ENCODE measurements at regions of chr5 and their contacts with region 1.

Region 1: GRCh38 chr5:147223948-147224791 is 10.7 kb upstream of the STK32A start:
- DNase-seq: peak; percentile 31 to 65
- H3K4me3 ChIP-seq: no peak overlapping the region
- H3K27ac ChIP-seq: no peak overlapping the region
- H3K4me1 ChIP-seq: no peaks in the 10 kb centered on the region
- H3K27me3 ChIP-seq: no peaks in the 10 kb centered on the region
- CTCF ChIP-seq: peak in 5 of 7 experiments; percentile 20 to 67 (median 51)
- EP300 ChIP-seq: no peak
- POLR2A ChIP-seq: no peak

Region 2: DNA sequence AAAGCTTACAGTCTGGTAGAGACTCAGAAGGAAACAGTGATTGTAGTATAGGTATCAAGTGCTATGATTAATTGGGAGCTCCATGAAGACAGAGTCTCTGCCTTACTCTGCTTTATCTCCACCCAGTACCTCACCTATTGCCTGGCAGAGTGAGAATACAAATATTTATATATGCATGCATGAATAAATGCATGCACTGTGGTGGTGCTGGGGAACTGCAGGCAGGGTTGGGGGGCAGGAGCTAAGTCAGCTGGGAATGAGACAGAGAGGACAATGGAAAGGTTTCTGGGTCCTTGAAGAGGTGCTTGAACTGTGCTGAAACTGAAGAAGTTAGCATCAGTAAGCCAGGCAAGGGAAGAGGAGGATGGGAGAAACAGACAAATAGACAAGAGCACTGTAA is 264.8 kb before region 1 on chr5:
- intact Hi-C with region 1: no loop called
- DNase-seq: no peak
- H3K4me3 ChIP-seq: no peak overlapping the region
- H3K27ac ChIP-seq: no peak overlapping the region
- H3K4me1 ChIP-seq: no peaks in the 10 kb centered on the region
- H3K27me3 ChIP-seq: no peaks in the 10 kb centered on the region
- CTCF ChIP-seq: no peak
- EP300 ChIP-seq: no peak
- POLR2A ChIP-seq: no peak

Region 3: GRCh38 chr5:147369742-147370374 is 145.7 kb after region 1 on chr5:
- intact Hi-C with region 1: loop called (anchors 5 kb)
- DNase-seq: no peak
- H3K4me3 ChIP-seq: no peak overlapping the region
- H3K27ac ChIP-seq: no peak overlapping the region
- H3K4me1 ChIP-seq: no peaks in the 10 kb centered on the region
- H3K27me3 ChIP-seq: no peaks in the 10 kb centered on the region
- CTCF ChIP-seq: peak in 4 of 7 experiments; percentile 10 to 58 (median 50)
- EP300 ChIP-seq: no peak
- POLR2A ChIP-seq: no peak

Region 4: DNA sequence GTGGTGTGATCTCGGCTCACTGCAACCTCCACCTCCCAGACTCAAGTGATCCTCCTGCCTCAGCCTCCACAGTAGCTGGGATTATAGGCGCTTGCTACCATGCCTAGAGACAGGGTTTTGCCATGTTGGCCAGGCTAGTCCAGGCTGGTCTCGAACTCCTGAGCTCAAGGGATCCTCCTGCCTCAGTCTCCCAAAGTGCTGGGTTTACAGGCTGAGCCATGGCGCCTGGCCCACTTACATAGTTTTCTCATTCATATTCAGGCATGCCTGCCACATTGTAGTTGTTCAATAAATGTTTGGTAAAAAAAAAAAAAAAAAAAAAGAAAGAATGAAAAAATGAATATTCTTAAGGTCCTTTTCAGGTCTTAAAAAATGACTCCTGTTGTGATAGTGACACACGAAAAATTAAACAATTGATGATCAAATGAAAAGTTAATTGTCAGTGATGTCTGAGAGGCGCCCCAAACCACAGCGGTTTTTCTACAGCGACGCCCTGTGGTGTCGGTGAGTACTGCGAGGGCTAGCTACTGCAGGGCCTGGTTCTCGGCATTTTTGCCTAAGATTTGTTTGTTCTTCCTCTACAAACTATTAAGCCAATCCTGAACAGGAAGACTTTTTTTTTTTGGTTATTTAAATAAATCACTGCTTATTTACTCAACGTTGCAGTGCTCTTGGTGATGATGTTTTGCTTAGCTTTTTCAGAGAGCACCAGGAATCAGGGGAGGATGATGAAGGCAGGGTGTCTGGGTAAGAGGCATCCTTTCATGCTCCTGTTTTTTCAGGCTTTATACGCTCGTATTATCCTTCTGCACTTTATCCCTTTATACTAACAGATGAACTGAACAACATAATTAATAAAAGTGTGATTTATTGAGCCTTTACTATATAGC is 352.7 kb after region 1 on chr5:
- intact Hi-C with region 1: loop called (anchors 10 kb)
- DNase-seq: peak; percentile 54 to 79
- H3K4me3 ChIP-seq: no peak overlapping the region
- H3K27ac ChIP-seq: no peak overlapping the region
- H3K4me1 ChIP-seq: no peaks in the 10 kb centered on the region
- H3K27me3 ChIP-seq: no peaks in the 10 kb centered on the region
- CTCF ChIP-seq: peak in 5 of 7 experiments; percentile 28 to 93 (median 73)
- EP300 ChIP-seq: no peak
- POLR2A ChIP-seq: no peak